ENCODE measurements at regions of chr11 and their contacts with region 1.

Region 1: DNA sequence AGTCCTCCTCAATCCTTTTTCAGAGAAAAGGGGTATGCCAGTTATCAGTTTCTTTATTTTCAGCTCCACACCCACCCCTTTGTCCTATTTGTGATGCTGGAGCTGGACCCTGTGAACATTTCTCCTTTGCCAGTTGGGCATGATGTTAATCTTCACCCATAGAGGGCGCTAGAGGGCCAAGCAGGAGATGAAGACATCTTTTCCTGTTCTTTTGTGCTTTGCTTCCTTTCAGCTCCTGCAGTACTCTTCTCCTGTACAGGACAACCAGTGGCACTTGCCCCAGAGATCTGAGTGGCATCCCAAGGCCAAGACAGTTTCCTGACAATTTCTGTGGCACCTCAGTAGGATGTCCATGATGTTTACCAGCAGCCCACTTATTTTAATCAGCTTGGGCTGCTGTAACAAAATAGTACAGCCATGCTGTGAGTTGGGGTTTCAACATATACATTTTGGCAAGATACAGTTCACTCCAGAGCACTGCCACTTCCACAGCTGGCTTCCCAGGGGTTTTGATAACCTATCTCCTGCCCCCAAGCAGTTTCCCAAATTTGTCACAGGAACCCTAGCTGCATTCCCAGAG is 4.6 kb downstream of the SAA2 start:
- DNase-seq: peak; percentile 81
- H3K4me3 Mint-ChIP-seq: no peak overlapping the region
- H3K27ac Mint-ChIP-seq: peak overlapping the region; percentile 58
- H3K4me1 Mint-ChIP-seq: peaks cover 32% of the 10 kb centered on the region
- H3K27me3 Mint-ChIP-seq: peaks cover 23% of the 10 kb centered on the region

Region 2: DNA sequence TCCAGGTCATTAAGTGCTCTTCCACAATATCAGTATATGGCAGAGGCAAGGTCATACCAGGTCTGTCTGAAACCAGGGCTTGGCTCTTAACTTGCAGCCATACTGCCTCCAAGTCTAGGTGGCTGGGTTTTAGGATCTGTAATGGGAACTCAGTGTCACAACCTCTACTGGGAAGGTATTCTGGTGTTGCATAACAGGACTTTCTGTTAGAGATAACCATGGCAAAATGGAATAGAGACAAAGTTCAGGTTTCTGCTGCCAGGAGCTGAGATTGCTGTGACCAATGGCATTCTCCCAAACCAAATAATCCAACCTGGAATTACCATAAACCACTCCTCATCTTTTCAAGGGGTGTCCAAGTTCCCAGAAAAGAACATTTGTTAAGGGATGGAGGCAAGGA is 15.4 kb after region 1 on chr11:
- CTCF ChIA-PET with region 1: interaction called, 10 read pairs
- DNase-seq: no peak
- H3K4me3 Mint-ChIP-seq: no peak overlapping the region
- H3K27ac Mint-ChIP-seq: no peak overlapping the region
- H3K4me1 Mint-ChIP-seq: peaks cover 5% of the 10 kb centered on the region
- H3K27me3 Mint-ChIP-seq: peaks cover 18% of the 10 kb centered on the region

Region 3: DNA sequence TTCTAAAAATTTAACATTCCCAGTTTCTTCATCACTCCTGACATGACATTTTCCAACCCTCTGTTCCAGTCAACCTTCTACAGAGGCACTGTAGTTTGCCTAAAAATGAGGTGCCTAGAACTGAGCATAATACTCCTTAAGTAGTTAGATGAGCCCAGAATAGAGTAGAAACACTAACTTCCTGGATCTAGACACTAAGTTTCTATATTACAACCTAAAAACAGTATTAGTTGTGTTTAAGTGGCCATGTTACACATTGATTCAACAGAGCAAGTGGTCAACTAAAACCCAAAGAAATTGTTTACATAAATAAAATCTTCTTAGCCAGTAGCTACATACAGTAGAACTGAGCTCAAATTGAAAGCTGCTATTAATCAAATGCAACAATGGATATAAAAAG is 76.7 kb after region 1 on chr11:
- CTCF ChIA-PET with region 1: interaction called, 13 read pairs
- DNase-seq: no peak
- H3K4me3 Mint-ChIP-seq: peak overlapping the region; percentile 54
- H3K27ac Mint-ChIP-seq: peak overlapping the region; percentile 61
- H3K4me1 Mint-ChIP-seq: peaks cover 68% of the 10 kb centered on the region
- H3K27me3 Mint-ChIP-seq: no peaks in the 10 kb centered on the region

Region 4: GRCh38 chr11:18395735-18396504 is 152.0 kb after region 1 on chr11:
- CTCF ChIA-PET with region 1: interaction called, 12 read pairs
- DNase-seq: peak; percentile 96
- H3K4me3 Mint-ChIP-seq: peak overlapping the region; percentile 99
- H3K27ac Mint-ChIP-seq: peak overlapping the region; percentile 99
- H3K4me1 Mint-ChIP-seq: peaks cover 66% of the 10 kb centered on the region
- H3K27me3 Mint-ChIP-seq: no peaks in the 10 kb centered on the region

Region 5: DNA sequence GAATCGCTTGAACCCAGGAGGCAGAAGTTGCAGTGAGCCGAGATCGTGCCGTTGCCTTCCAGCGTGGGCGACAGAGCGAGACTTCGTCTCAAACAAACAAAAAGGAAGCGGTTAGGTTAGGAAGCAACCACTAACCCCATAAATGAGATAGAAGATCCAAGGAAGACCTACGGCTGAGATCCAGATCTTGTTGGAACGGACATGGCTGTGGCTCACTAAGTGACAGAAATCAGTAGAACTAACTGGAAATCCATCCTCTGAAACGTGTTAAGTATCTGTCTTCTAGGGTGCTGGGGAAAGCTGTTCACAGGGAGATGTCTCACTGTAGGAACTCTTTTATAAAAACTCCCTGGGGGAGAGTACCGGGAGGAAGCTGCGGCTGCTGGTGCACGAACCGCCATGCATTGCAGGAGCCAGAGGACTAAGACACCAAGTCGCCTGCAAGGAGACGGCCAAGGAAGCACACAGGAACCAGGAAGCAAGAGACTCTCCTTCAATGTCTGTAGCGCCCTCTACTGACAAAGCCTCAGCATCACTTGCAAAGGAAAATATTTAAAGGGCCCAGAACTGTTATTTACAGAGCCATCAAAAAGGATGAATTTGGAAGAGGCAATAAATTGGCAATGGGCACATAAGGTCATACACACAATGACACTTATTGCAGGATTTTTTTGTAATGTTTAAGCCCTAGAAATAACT is 407.1 kb after region 1 on chr11:
- CTCF ChIA-PET with region 1: interaction called, 15 read pairs
- DNase-seq: peak; percentile 63
- H3K4me3 Mint-ChIP-seq: no peak overlapping the region
- H3K27ac Mint-ChIP-seq: peak overlapping the region; percentile 34
- H3K4me1 Mint-ChIP-seq: peaks cover 10% of the 10 kb centered on the region
- H3K27me3 Mint-ChIP-seq: peaks cover 11% of the 10 kb centered on the region

Region 6: DNA sequence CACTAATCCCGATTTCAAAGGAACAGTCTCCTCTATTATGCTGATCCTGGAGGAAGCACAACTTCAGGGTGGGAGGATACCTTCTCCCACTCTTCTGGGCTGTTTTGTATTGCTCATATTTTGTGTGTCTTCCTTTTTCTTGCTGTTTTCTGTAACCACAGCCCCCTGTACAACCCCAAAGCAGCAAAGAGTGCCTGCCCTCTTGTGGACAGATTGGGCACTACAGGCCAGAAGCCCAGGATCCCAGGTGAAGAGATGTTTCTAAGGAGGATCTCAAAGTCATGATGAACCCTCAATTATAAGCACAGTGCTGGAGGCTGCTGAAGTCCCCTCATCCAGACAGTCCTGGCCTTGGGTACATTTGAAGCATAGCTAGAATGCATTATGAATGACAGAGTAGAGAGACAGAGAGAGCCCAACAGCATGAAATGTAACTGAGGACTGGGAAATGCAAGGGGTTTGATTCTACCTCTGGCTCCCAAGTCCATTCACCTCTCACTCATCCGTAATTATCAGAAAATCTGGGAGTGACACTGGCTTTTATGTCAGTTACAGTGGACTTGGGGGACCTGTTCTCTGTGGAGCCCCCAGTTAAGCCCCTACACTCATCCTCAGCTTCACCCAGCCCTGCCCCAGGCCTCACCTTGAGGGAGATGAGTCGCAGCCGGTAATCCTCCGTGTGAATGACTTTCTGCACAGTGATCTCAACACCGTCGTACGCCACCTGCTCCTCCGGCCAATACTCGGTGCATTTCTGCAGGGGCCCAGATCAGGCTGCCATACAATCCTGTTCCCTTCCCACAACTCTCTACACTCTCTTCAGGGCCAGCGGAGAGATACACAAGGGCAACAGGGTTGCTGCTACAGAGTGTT is 488.3 kb after region 1 on chr11:
- CTCF ChIA-PET with region 1: interaction called, 11 read pairs
- DNase-seq: peak; percentile 77
- H3K4me3 Mint-ChIP-seq: no peak overlapping the region
- H3K27ac Mint-ChIP-seq: no peak overlapping the region
- H3K4me1 Mint-ChIP-seq: peaks cover 3% of the 10 kb centered on the region
- H3K27me3 Mint-ChIP-seq: peaks cover 10% of the 10 kb centered on the region